ENCODE measurements at regions of chr10 and their contacts with region 1.

Region 1: GRCh38 chr10:69644658-69645295 is 14.7 kb downstream of the FAM241B start:
- DNase-seq: peak; percentile 40 to 57
- ATAC-seq: peak in 6 of 8 donors; percentile 42 to 69 (median 58)
- H3K4me3 ChIP-seq: no peak overlapping the region
- H3K27ac ChIP-seq: no peak overlapping the region
- H3K4me1 ChIP-seq: no peaks in the 10 kb centered on the region
- H3K27me3 ChIP-seq: peaks cover 0 to 41% (median 12%) of the 10 kb centered on the region in 7 donors
- CTCF ChIP-seq: peak; percentile 62 to 90 (median 80)

Region 2: DNA sequence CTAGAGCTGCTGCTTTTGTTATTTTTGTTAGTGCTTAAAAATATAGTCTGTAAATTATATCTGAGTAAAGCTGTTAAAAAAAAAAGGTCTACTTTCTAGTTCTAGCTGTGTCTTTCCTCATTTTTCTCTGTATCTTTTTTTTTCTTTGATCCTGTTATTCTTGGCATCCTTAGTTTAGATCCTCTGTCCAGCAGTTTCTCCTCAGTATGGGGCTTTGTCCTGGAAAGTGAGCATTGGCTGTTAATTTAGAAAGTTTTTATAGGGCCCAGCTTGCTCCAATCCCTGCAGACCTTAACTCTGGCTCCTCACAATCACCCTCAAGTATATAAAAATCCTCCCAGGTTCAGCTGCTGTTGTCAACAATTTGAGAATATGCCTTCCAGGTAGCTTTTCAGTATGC is 720.2 kb before region 1 on chr10:
- intact Hi-C with region 1: no loop called
- DNase-seq: no peak
- ATAC-seq: no peak
- H3K4me3 ChIP-seq: no peak overlapping the region
- H3K27ac ChIP-seq: peak overlapping the region in 1 of 10 donors; percentile 8
- H3K4me1 ChIP-seq: peaks cover 0 to 10% (median 0%) of the 10 kb centered on the region in 9 donors
- H3K27me3 ChIP-seq: no peaks in the 10 kb centered on the region
- CTCF ChIP-seq: no peak

Region 3: GRCh38 chr10:69710008-69710888 is 65.5 kb after region 1 on chr10:
- intact Hi-C with region 1: loop called in 3 of 10 experiments (anchors 2 to 5 kb)
- DNase-seq: no peak
- ATAC-seq: no peak
- H3K4me3 ChIP-seq: no peak overlapping the region
- H3K27ac ChIP-seq: no peak overlapping the region
- H3K4me1 ChIP-seq: no peaks in the 10 kb centered on the region
- H3K27me3 ChIP-seq: peaks cover 0 to 13% (median 7%) of the 10 kb centered on the region in 7 donors
- CTCF ChIP-seq: no peak

Region 4: GRCh38 chr10:69716711-69717560 is 72.2 kb after region 1 on chr10:
- intact Hi-C with region 1: loop called (anchors 1 to 5 kb)
- DNase-seq: peak in 1 of 2 donors; percentile 40
- ATAC-seq: peak in 7 of 8 donors; percentile 26 to 64 (median 54)
- H3K4me3 ChIP-seq: no peak overlapping the region
- H3K27ac ChIP-seq: no peak overlapping the region
- H3K4me1 ChIP-seq: peaks cover 0 to 17% (median 6%) of the 10 kb centered on the region in 9 donors
- H3K27me3 ChIP-seq: no peaks in the 10 kb centered on the region
- CTCF ChIP-seq: peak; percentile 27 to 72 (median 66)